Body of pancreas (tissue), 4 donors: ENCODE measurements at regions of chr20 and their contacts with region 1.

Region 1: DNA sequence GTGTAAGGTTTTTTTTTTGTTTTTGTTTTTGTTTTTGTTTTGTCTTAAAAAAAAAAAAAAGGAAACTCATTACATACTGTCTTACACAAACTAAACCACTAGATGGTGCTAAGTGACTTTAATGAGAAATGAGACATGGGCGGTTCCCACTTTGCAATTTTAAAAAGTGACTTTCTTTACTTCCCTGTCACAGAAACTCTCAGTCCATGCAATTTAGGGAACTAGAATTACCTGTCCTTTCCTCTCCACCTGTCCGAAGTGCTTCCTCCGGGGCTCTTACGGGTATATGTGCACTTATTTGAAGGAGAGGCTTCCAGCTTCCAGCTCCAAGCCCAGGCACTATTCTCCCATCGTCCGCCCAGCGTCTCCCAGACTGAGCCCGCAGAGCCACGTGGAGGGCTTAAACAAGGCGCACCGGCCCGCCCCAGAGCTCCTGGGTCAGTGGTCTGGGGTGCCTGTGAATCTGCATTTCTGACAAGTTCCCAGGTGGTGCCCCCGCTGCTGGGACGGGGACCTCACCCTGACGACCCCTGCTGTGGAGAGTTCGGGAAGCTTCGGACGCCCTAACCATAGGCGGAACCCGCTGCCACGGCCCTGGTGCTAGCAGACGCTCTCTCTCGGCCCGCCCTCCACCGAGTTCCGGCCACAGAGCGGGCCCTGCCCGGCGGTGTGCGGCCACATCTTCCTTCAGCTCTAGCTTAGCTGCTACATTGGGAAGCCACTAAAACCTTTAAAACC is 26.1 kb downstream of the BFSP1 start:
- DNase-seq: peak; percentile 24 to 50 (median 32)
- ATAC-seq: peak; percentile 77
- H3K4me3 ChIP-seq: no peak overlapping the region
- H3K27ac ChIP-seq: peak overlapping the region in 3 of 4 donors; percentile 4 to 25 (median 18)
- H3K4me1 ChIP-seq: peaks cover 12% of the 10 kb centered on the region
- H3K27me3 ChIP-seq: no peaks in the 10 kb centered on the region
- CTCF ChIP-seq: peak; percentile 54 to 87 (median 68)
- POLR2A ChIP-seq: no peak

Region 2: GRCh38 chr20:17898548-17898994 is 393.5 kb after region 1 on chr20:
- intact Hi-C with region 1: no loop called
- DNase-seq: peak; percentile 84 to 86 (median 84)
- ATAC-seq: peak; percentile 85
- H3K4me3 ChIP-seq: no peak overlapping the region
- H3K27ac ChIP-seq: peak overlapping the region in 1 of 4 donors; percentile 42
- H3K4me1 ChIP-seq: peaks cover 17% of the 10 kb centered on the region
- H3K27me3 ChIP-seq: no peaks in the 10 kb centered on the region
- CTCF ChIP-seq: peak; percentile 69 to 97 (median 95)
- POLR2A ChIP-seq: no peak

Region 3: GRCh38 chr20:17995967-17996819 is 491.1 kb after region 1 on chr20:
- intact Hi-C with region 1: loop called (anchors 10 kb)
- DNase-seq: peak; percentile 22 to 61 (median 56)
- ATAC-seq: peak; percentile 73
- H3K4me3 ChIP-seq: no peak overlapping the region
- H3K27ac ChIP-seq: no peak overlapping the region
- H3K4me1 ChIP-seq: peaks cover 3% of the 10 kb centered on the region
- H3K27me3 ChIP-seq: no peaks in the 10 kb centered on the region
- CTCF ChIP-seq: peak; percentile 91 to 100 (median 96)
- POLR2A ChIP-seq: no peak